Common myeloid progenitor, CD34-positive (primary cell): ENCODE measurements at regions of chr9 and their contacts with region 1.

Region 1: DNA sequence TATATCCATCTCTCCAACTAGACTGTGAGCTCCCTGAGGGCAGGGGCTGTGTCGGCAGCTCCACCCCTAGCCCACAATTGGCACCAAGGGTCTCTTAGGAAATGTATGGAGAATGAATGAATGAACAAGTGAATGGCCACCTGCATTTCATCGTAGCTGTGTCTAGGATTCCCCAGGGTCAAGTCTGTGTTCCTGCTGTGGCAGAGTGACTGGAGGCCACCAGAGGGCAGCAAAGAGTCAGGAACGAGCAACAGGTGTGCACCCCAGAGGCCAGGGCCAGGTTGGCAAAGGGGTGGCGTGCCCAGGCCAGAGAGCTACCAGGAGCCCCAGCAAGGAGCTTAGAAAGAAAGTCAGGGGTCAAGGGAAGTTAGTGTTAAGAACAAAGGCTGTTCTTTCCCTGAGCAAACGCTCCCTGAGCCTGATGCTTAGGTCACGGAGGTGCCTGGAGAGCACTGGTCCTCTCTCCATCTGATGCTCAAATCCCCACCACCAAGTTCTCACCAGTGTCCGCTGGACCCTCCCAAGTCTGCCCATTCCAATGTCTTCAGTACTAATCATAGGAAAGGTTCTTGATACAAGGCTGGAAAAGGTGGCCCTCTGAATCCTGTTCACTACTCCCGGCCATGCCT is 160.7 kb downstream of the PAX5 start:
- DNase-seq: peak; percentile 58 to 77 (median 68)
- H3K4me3 ChIP-seq: no peak overlapping the region
- H3K27ac ChIP-seq: no peak overlapping the region
- H3K4me1 ChIP-seq: peaks cover 0 to 8% (median 0%) of the 10 kb centered on the region in 4 experiments
- H3K27me3 ChIP-seq: peaks cover 0 to 12% (median 3%) of the 10 kb centered on the region in 5 experiments

Region 2: GRCh38 chr9:36781533-36781932 is 91.8 kb before region 1 on chr9:
- CTCF ChIA-PET with region 1: no interaction called
- POLR2A ChIA-PET with region 1: no interaction called
- DNase-seq: no peak
- H3K4me3 ChIP-seq: no peak overlapping the region
- H3K27ac ChIP-seq: no peak overlapping the region
- H3K4me1 ChIP-seq: peaks cover 0 to 2% (median 2%) of the 10 kb centered on the region in 4 experiments
- H3K27me3 ChIP-seq: peaks cover 0 to 8% (median 0%) of the 10 kb centered on the region in 5 experiments

Region 3: GRCh38 chr9:36855448-36856315 is 17.7 kb before region 1 on chr9:
- CTCF ChIA-PET with region 1: interaction called, 12 read pairs
- POLR2A ChIA-PET with region 1: no interaction called
- DNase-seq: peak; percentile 65 to 83 (median 79)
- H3K4me3 ChIP-seq: no peak overlapping the region
- H3K27ac ChIP-seq: no peak overlapping the region
- H3K4me1 ChIP-seq: peaks cover 0 to 8% (median 7%) of the 10 kb centered on the region in 4 experiments
- H3K27me3 ChIP-seq: no peaks in the 10 kb centered on the region

Region 4: DNA sequence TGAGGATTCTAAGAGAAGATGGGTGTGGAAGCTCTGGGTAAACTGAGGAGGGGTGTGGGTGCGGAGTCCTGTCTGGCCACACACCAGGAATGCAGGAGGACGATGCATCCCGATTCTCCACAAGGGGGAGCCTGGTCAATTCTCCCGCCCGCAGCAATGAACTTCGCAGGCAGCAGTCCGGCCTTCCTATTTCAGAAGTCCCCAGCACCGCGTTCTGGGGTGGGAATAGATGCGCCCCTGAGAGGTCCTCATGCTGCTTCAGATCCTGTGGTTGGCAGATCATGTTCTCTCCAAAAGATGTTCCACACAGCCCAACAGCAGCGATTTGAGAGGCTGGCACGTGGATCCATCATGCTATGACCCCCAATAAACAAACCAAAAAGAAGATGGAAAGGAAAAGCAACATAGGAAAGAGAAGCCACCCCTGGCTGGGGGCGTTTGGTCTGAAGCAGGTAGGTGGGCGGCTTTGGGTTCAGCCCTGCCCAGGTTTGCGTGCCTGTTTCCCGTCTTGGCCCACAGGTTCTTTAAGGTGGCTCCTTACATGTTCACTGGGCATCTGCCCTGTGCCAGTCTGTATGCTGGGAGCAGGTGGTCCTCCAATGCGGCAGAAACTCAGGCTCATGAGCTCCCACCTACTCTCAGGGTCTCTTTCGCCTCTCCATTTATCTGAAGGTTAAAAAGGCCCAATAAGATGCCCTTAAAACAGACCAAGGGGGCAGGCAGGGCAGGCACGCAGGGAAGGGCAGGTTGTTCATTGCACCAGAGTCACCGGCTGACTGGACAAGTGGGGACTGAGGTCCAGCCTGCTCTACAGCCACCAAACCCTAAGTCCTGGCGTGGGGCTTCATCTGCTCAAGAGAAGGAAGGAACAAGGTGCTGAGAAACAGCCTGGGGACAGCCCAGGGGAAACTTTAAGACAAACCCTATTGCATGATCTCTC is 10.9 kb before region 1 on chr9:
- CTCF ChIA-PET with region 1: interaction called, 10 read pairs
- POLR2A ChIA-PET with region 1: no interaction called
- DNase-seq: peak in 2 of 3 donors; percentile 22 to 26
- H3K4me3 ChIP-seq: no peak overlapping the region
- H3K27ac ChIP-seq: no peak overlapping the region
- H3K4me1 ChIP-seq: no peaks in the 10 kb centered on the region
- H3K27me3 ChIP-seq: peaks cover 0 to 4% (median 3%) of the 10 kb centered on the region in 5 experiments

Region 5: DNA sequence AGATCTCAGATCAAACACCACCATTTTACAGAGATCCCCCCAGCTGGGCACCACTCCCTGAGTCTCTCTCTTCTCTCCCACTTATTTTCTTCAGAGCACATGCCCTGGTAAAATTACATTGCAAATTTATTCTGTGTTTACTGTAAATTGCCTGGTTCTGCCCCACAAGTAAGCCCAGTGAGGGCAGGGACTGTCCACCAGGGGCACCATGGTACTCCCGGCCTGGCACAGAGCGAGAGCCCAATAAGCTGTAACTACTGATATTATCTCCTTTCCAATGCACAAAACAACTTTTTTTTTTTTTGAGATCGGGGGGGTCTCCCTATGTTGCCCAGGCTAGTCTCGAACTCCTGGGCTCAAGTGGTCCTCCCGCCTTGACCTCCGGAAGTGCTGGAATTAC is 37.7 kb after region 1 on chr9:
- CTCF ChIA-PET with region 1: interaction called, 10 read pairs
- POLR2A ChIA-PET with region 1: no interaction called
- DNase-seq: no peak
- H3K4me3 ChIP-seq: no peak overlapping the region
- H3K27ac ChIP-seq: no peak overlapping the region
- H3K4me1 ChIP-seq: peaks cover 0 to 10% (median 8%) of the 10 kb centered on the region in 4 experiments
- H3K27me3 ChIP-seq: peaks cover 0 to 32% (median 18%) of the 10 kb centered on the region in 5 experiments

Region 6: DNA sequence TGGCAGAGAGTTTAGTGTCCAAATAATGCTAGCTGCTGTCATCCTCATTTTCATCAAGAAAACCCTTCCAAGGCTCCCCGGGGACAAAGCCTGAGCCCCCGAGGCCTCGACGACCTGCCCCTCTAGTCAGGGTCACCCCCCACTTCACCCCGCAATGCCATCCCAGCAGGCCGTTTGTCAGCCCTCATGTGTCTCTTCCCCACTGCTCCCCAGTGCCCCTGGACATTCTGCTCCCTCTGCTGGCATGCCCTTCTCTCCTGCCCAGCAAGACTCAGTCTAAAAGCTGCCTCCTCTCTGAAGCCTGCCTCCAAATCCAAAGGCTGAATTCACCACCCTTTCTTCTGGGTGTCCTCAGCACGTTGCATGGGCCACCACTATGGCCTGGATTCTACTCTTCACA is 101.4 kb after region 1 on chr9:
- CTCF ChIA-PET with region 1: interaction called, 11 read pairs
- POLR2A ChIA-PET with region 1: no interaction called
- DNase-seq: no peak
- H3K4me3 ChIP-seq: no peak overlapping the region
- H3K27ac ChIP-seq: no peak overlapping the region
- H3K4me1 ChIP-seq: no peaks in the 10 kb centered on the region
- H3K27me3 ChIP-seq: peaks cover 0 to 5% (median 2%) of the 10 kb centered on the region in 5 experiments

Region 7: GRCh38 chr9:36995927-36996705 is 122.8 kb after region 1 on chr9:
- CTCF ChIA-PET with region 1: interaction called, 72 read pairs
- POLR2A ChIA-PET with region 1: no interaction called
- DNase-seq: peak; percentile 55 to 69 (median 62)
- H3K4me3 ChIP-seq: peak overlapping the region in 5 of 7 experiments; percentile 10 to 61 (median 42)
- H3K27ac ChIP-seq: no peak overlapping the region
- H3K4me1 ChIP-seq: peaks cover 0 to 3% (median 1%) of the 10 kb centered on the region in 4 experiments
- H3K27me3 ChIP-seq: peaks cover 0 to 67% (median 29%) of the 10 kb centered on the region in 5 experiments

Region 8: DNA sequence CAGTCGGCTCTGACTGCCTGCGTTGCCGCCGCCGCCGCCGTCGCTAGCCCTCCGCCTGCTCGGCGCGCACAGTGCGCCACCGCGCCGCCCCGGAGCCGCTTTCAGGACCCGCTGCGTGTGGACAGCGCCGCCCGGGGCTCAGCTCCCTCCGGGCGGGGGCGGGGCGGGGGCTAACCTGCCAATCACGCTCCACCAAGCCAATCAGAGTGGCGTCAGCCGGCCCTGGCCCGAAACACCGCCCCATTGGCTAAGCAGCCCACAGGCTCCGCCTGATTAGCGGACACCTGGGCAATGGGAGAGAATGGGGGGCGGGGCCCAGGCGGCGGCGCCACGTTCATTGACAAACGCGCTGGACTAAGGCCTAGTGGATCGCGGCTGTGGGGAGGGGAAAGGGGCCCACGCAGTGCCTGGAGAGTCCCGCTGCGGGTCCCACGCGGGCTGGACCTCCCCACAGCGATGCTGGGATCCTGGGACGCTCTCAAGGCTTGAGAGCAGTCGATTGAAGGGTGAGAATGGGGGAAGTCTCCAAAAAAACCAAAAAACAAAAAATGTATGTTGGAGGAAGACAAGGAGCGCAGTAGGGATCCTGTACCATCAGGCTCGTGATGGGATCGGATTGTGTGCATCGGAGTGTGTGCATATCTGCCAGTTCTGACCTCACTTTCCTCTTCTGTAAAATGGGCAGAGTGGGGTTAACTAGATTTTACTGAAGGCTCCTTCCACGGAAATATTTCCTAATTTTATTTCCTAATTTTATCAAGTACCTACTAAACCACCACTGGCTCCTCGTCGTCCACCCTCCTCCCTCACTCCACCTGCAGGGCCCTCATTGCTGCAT is 154.4 kb after region 1 on chr9:
- CTCF ChIA-PET with region 1: no interaction called
- POLR2A ChIA-PET with region 1: no interaction called
- DNase-seq: peak; percentile 94 to 97 (median 96)
- H3K4me3 ChIP-seq: peak overlapping the region in 5 of 7 experiments; percentile 27 to 61 (median 56)
- H3K27ac ChIP-seq: no peak overlapping the region
- H3K4me1 ChIP-seq: peaks cover 0 to 49% (median 41%) of the 10 kb centered on the region in 4 experiments
- H3K27me3 ChIP-seq: peaks cover 12 to 99% (median 83%) of the 10 kb centered on the region in 5 experiments